Calu3 (cell line): ENCODE measurements at regions of chr9 and their contacts with region 1.

Region 1: DNA sequence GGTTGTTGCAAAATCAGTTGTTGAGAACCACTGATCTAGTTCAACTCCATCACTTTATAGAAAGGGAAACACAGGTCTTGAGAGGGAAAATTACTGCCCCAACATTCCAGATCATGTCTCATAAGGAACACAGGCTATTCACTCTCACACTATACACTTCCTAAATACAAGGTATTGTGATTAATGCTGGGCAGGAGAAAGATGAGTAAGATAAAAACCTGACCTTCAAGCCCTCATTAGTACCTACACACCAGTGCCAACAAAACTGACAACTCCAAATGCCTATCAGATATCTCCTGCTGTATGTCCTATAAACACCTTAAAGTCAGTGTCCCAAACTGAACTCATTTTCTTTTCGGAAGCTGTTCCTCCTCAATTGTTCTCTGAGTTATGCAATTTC is 8.2 kb downstream of the GNE start:
- DNase-seq: no peak
- H3K4me3 Mint-ChIP-seq: no peak overlapping the region
- H3K27ac Mint-ChIP-seq: no peak overlapping the region
- H3K4me1 Mint-ChIP-seq: peaks cover 14% of the 10 kb centered on the region
- H3K27me3 Mint-ChIP-seq: no peaks in the 10 kb centered on the region
- CTCF ChIP-seq: no peak

Region 2: GRCh38 chr9:36317764-36318163 is 67.7 kb after region 1 on chr9:
- CTCF ChIA-PET with region 1: no interaction called
- intact Hi-C with region 1: loop called (anchors 5 kb)
- DNase-seq: peak; percentile 85
- H3K4me3 Mint-ChIP-seq: peak overlapping the region; percentile 66
- H3K27ac Mint-ChIP-seq: peak overlapping the region; percentile 83
- H3K4me1 Mint-ChIP-seq: no peaks in the 10 kb centered on the region
- H3K27me3 Mint-ChIP-seq: no peaks in the 10 kb centered on the region
- CTCF ChIP-seq: no peak

Region 3: DNA sequence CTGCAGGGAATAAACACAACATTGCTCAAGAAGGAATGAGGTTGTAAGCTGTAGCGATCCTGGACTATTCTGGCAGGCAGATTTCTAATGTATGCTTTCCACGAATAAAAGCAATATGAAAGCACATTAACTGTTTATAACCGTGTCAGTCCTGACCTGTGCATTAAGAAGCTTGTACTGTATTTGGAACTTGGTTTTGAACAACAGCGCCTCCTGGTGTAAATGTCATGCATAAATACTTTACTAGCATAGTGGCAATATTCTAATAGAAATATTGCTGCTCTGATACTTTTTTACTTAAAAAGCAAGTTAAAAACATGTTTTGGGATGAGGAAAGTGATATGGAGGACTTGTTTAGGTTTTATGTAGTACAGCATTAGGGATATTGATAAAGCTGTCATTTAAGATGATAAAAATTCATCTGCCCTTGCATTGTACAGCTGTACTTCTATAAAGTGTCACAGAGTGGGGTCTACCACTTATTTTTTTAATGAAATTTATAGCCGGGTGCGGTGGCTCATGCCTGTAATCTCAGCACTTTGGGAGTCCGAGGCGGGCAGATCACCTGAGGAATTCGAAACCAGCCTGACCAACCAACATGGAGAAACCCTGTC is 78.8 kb after region 1 on chr9:
- CTCF ChIA-PET with region 1: no interaction called
- intact Hi-C with region 1: loop called (anchors 1 kb)
- DNase-seq: no peak
- H3K4me3 Mint-ChIP-seq: no peak overlapping the region
- H3K27ac Mint-ChIP-seq: no peak overlapping the region
- H3K4me1 Mint-ChIP-seq: peaks cover 15% of the 10 kb centered on the region
- H3K27me3 Mint-ChIP-seq: no peaks in the 10 kb centered on the region
- CTCF ChIP-seq: no peak